T-cell (primary cell): ENCODE measurements at regions of chr11 and their contacts with region 1.

Region 1: DNA sequence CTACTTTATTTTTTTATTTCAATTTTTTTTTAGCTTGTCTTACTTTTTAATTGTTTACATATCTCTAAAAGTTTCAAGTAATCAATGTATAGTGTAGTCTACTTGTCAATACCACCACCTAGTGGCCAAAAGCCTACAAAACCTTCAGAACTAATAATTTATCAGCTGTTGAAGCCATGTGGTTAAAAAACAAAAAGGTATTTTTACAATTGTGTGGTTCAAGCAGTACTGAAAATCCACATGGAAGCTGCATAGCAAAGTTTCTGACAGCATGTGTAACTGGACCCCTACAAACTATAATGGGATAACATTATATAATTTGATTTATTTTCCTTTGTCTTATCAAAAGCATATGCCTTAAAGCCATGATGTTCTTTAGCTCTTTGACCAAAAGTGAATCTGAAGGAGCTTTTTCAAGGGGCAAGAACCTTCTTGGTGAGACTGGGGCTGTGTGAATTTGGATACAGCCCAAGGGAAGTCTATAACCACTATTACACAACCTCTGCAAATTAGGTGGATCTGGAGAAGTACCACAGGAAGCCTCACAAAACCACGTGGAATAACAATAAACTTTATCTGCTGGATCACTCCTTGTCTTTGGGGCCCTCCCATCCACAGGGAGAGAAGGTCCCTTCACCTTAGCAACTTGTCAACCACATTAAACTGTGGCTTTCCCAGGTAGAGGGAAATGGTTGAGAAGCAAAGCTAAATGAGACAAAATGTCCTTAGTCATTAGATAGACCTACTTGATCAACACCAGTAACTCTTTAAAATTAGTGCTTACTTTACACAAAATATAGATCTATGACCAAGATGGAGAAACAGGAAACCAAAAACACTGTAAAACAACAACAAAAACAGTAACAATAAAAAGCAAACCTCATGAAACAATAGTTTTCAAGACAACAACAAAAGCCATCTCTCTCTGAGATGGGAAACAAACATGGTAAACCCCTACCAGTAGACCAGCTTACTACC is 9.9 kb downstream of the NARS2 start:
- DNase-seq: peak in 22 of 35 experiments; percentile 4 to 78 (median 26)
- ATAC-seq: peak in 3 of 4 experiments; percentile 57 to 69 (median 64)
- H3K4me3 ChIP-seq: no peak overlapping the region
- H3K4me3 Mint-ChIP-seq: no peak overlapping the region
- H3K27ac ChIP-seq: no peak overlapping the region
- H3K27ac Mint-ChIP-seq: peak overlapping the region in 1 of 2 donors; percentile 0
- H3K4me1 ChIP-seq: peaks cover 0 to 9% of the 10 kb centered on the region in 2 experiments
- H3K4me1 Mint-ChIP-seq: peaks cover 26 to 34% (median 33%) of the 10 kb centered on the region in 3 donors
- H3K27me3 ChIP-seq: no peaks in the 10 kb centered on the region
- H3K27me3 Mint-ChIP-seq: no peaks in the 10 kb centered on the region

Region 2: DNA sequence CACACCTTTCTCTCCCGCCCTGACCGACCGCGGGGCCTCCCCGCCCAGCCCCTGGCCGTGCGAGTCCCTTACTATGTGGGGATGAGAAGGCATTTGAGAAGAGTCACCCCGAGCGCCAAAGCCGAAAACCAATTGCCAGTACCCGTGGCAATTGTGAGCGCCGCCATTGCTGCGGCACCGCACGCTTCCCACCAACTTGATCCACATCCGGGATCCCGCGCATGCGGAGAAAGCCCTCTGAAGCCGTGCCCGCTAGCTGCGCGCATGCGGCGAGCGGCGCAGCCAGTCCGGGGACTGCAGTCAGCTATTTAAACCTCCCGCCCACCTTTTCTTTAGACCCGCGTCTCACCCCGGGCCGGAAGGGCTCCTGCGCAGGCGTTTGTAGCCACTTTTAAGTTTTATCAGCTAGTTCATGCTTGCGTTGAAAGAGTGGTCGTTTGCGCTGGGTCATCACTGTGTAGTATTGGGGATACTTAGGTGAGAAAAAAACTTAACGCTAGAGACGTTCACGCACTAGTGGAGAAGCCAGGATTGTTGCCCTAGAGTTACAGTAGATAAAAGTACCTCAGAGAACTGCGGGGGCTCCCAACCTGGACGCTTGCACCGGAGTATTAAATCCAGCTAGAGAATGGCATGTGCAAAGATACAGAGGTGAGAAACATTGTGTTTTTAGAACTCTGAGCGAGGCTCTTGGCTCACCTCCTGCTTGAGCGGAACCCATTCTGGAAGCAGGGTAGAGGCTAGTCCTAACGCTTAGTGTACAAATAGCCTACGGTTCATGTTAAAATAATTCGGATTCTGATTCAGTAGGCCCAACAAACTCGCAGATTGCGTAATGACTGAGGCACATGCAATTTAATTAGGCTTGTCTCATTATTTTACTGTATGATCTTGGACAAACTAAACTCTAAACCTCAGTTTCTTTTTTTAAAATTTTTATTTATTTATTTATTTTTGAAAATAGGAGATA is 425.1 kb before region 1 on chr11 and contains the start of gene ALG8:
- CTCF ChIA-PET with region 1: interaction called in 1 of 2 experiments, 13 read pairs
- POLR2A ChIA-PET with region 1: no interaction called
- DNase-seq: peak; percentile 94 to 98 (median 96)
- ATAC-seq: peak; percentile 93 to 98 (median 94)
- H3K4me3 ChIP-seq: peak within 1 kb of the TSS; percentile 66 to 93
- H3K4me3 Mint-ChIP-seq: peak within 1 kb of the TSS; percentile 95 to 97 (median 96)
- H3K27ac ChIP-seq: peak within 1 kb of the TSS; percentile 63
- H3K27ac Mint-ChIP-seq: peak within 1 kb of the TSS; percentile 95 to 97
- H3K4me1 ChIP-seq: peaks cover 8 to 20% of the 10 kb centered on the region in 2 experiments
- H3K4me1 Mint-ChIP-seq: peaks cover 38 to 46% (median 42%) of the 10 kb centered on the region in 3 donors
- H3K27me3 ChIP-seq: no peaks in the 10 kb centered on the region
- H3K27me3 Mint-ChIP-seq: no peaks in the 10 kb centered on the region
- total RNA-seq, gene ALG8: 23.1 to 34.1 (median 31.8) TPM

Region 3: GRCh38 chr11:78228467-78228866 is 336.3 kb before region 1 on chr11:
- CTCF ChIA-PET with region 1: interaction called in 1 of 2 experiments, 22 read pairs
- POLR2A ChIA-PET with region 1: no interaction called
- DNase-seq: peak in 2 of 35 experiments; percentile 7 to 47
- ATAC-seq: peak in 2 of 4 experiments; percentile 42 to 63
- H3K4me3 ChIP-seq: no peak overlapping the region
- H3K4me3 Mint-ChIP-seq: no peak overlapping the region
- H3K27ac ChIP-seq: no peak overlapping the region
- H3K27ac Mint-ChIP-seq: no peak overlapping the region
- H3K4me1 ChIP-seq: peaks cover 0 to 5% of the 10 kb centered on the region in 2 experiments
- H3K4me1 Mint-ChIP-seq: peaks cover 4 to 28% (median 20%) of the 10 kb centered on the region in 3 donors
- H3K27me3 ChIP-seq: no peaks in the 10 kb centered on the region
- H3K27me3 Mint-ChIP-seq: no peaks in the 10 kb centered on the region

Region 4: GRCh38 chr11:78416305-78417178 is 148.2 kb before region 1 on chr11:
- CTCF ChIA-PET with region 1: interaction called, 5 to 62 read pairs
- POLR2A ChIA-PET with region 1: interaction called in 1 of 2 experiments, 6 read pairs
- DNase-seq: peak; percentile 38 to 80 (median 64)
- ATAC-seq: peak; percentile 62 to 64 (median 62)
- H3K4me3 ChIP-seq: peak overlapping the region; percentile 54 to 64
- H3K4me3 Mint-ChIP-seq: peak overlapping the region; percentile 87 to 94 (median 94)
- H3K27ac ChIP-seq: no peak overlapping the region
- H3K27ac Mint-ChIP-seq: peak overlapping the region; percentile 66 to 86
- H3K4me1 ChIP-seq: peaks cover 5 to 25% of the 10 kb centered on the region in 2 experiments
- H3K4me1 Mint-ChIP-seq: peaks cover 17 to 37% (median 22%) of the 10 kb centered on the region in 3 donors
- H3K27me3 ChIP-seq: peaks cover 0 to 20% of the 10 kb centered on the region in 2 experiments
- H3K27me3 Mint-ChIP-seq: peaks cover 15 to 16% of the 10 kb centered on the region in 2 donors

Region 5: DNA sequence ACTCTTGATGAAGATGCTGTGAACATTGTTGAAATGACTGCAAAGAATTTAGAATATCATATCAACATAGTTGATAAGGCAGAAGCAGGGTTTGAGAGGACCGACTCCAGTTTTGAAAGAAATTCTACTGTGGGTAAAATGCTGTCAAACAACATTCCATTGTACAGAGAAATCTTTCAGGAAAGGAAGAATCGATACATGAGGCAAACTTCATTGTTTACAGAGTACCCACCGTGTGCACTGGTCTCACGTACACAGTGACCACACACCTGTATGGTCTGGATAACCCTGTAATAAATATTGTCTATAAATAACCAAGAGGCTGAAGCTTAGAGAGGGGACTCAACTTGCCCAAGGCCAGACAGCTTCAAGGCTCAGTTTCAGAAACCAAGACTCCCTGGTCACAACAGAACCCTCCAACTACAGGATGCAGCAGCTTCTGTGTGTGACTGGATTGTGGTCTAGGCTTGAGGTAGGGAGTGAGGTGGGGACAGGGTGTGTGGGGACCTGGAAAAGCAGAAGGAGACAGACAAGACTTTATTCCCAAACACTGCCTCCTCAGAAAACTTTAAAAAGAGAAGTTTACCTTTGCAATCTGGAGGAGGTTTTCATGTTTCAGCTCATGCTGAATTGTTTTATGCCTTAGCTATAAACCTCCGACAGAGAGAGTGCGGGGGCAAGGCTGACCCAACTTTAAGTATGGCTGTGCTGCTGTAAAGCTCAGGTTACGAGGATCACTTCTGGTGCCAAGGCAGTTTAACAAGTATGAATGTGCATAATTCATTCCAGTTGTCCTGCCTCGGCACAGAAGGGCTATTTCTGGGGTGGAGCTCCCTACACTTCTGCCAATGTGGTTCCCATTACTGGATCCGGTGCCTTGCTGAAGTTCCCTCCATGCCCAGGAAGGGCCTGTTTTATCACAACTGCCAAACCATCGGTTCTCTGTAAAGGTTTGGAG is 382.4 kb after region 1 on chr11:
- CTCF ChIA-PET with region 1: no interaction called
- POLR2A ChIA-PET with region 1: no interaction called
- DNase-seq: no peak
- ATAC-seq: no peak
- H3K4me3 ChIP-seq: no peak overlapping the region
- H3K4me3 Mint-ChIP-seq: no peak overlapping the region
- H3K27ac ChIP-seq: no peak overlapping the region
- H3K27ac Mint-ChIP-seq: no peak overlapping the region
- H3K4me1 ChIP-seq: no peaks in the 10 kb centered on the region
- H3K4me1 Mint-ChIP-seq: no peaks in the 10 kb centered on the region
- H3K27me3 ChIP-seq: peaks cover 0 to 2% of the 10 kb centered on the region in 2 experiments
- H3K27me3 Mint-ChIP-seq: peaks cover 5 to 12% of the 10 kb centered on the region in 2 donors